Adrenal gland (tissue), 19 donors: ENCODE measurements at regions of chr3 and their contacts with region 1.

Region 1: DNA sequence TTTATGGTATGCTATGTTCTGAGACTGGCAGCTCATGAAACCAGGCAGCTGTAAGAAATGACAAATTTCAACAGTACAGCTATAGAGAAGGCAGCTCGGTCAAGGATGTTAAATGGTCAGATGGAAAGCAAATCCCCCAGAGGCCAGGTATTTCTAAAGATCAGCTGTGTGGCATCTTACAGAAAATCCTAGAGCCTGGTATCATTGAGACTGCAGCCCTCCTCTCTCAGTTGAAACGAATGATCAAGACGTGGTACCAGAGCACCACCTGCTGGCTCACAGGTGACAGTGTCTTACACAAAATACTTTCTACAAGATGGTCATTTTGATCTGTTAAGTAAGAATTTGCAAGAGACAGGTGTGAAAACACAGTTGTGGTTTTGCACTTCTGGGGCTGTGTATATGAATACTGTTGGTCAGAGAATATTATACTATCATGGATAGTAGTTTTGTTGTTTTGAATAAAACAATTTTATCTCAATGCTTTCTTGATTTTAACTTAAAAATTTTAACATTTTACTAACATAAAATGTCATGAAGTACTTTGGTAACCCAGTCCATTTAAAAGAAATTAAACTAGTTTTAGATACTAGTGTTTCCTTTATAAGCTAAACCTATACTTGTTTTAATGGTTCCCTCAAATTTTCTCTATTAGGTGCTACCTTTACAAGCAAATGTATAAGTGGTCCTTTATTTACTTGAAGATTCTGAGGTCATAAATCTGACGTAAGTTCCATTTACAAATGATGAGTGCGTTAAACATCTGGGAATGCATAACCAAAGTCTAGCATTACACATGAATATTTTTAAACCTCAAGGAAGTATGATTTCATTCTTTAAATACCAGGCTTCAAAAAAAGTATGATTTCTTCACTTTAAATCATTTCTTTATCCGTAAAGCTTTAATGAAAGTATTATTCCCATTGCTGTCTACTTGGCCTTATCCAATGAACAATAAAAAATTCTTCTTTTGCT is 121.8 kb downstream of the PDZRN3 start:
- DNase-seq: peak; percentile 68 to 87 (median 79)
- H3K4me3 ChIP-seq: no peak overlapping the region
- H3K27ac ChIP-seq: no peak overlapping the region
- H3K4me1 ChIP-seq: peaks cover 5 to 20% of the 10 kb centered on the region in 2 donors
- H3K27me3 ChIP-seq: no peaks in the 10 kb centered on the region
- CTCF ChIP-seq: peak; percentile 51 to 93 (median 90)
- POLR2A ChIP-seq: no peak

Region 2: DNA sequence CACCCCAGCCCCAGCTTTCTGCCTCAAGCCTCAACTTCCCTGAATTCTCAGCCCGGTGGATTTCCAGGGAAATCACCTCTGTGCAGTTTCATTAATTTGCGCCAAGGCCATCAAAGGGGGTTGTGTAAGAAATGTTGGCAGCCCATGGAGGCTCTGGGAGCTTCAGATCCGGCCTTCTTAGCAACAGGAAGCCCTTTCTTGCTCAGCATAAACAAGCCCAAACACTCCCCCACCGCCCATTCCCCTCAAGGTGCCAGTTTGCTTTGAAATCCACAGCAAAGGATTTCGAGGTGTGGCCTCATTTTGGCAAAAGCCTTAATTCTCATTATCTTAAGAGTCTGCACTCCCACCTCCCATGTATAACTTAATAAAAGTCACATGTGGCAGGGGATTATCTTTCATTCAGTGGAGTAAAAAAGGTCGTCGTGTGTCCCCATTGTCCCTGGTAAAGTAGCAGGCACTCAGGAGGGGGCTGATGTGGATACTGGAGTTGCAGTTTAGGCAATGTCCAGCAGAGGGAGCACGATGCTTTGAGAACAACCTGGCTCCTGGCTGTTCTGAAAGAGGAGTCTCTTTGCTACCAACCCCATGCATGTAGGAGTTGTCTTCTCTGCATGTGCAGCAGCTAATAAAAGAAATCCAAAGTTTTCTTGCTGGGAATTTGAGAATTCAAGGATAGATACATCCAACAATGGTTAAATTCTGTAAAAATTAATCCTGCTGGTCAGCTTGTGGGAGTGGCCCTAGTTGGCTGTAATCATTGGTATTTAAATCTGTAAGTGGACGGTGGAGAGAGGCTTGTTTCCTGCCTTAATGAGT is 401.9 kb before region 1 on chr3:
- intact Hi-C with region 1: loop called (anchors 5 kb)
- DNase-seq: peak; percentile 78 to 96 (median 88)
- H3K4me3 ChIP-seq: no peak overlapping the region
- H3K27ac ChIP-seq: no peak overlapping the region
- H3K4me1 ChIP-seq: no peaks in the 10 kb centered on the region
- H3K27me3 ChIP-seq: no peaks in the 10 kb centered on the region
- CTCF ChIP-seq: peak; percentile 89 to 97 (median 92)
- POLR2A ChIP-seq: no peak

Region 3: DNA sequence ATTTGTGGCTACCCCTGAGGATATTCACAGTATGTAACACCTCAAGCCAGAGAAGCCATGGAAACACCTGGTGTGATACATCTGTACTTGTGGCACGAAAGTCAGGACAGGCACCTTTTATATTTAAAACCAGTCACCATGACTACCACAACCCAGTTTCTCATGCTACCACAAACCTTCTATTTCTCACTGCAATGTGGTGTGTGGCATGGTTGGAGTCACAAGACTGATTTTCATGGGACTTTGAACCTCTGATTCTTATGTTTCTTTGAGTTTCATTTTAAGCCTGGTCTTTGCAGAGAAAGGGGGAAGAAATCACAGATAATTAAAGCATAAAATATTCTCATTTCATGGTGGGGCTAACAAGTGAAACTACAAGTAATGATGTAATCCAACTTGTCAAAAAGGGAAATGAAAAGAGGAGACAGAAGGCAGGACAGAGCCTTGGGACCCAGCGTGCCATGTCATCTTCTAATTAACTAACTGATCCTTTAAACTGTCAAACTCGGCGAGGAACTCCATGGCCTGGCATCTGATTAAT is 54.1 kb before region 1 on chr3:
- intact Hi-C with region 1: no loop called
- DNase-seq: no peak
- H3K4me3 ChIP-seq: no peak overlapping the region
- H3K27ac ChIP-seq: no peak overlapping the region
- H3K4me1 ChIP-seq: peaks cover 0 to 4% of the 10 kb centered on the region in 2 donors
- H3K27me3 ChIP-seq: no peaks in the 10 kb centered on the region
- CTCF ChIP-seq: no peak
- POLR2A ChIP-seq: no peak

Region 4: GRCh38 chr3:73459711-73460110 is 43.2 kb before region 1 on chr3:
- intact Hi-C with region 1: loop called in 1 of 2 experiments (anchors 5 kb)
- DNase-seq: no peak
- H3K4me3 ChIP-seq: no peak overlapping the region
- H3K27ac ChIP-seq: no peak overlapping the region
- H3K4me1 ChIP-seq: peaks cover 6 to 33% of the 10 kb centered on the region in 2 donors
- H3K27me3 ChIP-seq: no peaks in the 10 kb centered on the region
- CTCF ChIP-seq: no peak
- POLR2A ChIP-seq: no peak